Activated CD4-positive, alpha-beta T cell treated with anti-CD3 and anti-CD28 coated beads for 36 hours (primary cell): ENCODE measurements at regions of chr1 and their contacts with region 1.

Region 1: DNA sequence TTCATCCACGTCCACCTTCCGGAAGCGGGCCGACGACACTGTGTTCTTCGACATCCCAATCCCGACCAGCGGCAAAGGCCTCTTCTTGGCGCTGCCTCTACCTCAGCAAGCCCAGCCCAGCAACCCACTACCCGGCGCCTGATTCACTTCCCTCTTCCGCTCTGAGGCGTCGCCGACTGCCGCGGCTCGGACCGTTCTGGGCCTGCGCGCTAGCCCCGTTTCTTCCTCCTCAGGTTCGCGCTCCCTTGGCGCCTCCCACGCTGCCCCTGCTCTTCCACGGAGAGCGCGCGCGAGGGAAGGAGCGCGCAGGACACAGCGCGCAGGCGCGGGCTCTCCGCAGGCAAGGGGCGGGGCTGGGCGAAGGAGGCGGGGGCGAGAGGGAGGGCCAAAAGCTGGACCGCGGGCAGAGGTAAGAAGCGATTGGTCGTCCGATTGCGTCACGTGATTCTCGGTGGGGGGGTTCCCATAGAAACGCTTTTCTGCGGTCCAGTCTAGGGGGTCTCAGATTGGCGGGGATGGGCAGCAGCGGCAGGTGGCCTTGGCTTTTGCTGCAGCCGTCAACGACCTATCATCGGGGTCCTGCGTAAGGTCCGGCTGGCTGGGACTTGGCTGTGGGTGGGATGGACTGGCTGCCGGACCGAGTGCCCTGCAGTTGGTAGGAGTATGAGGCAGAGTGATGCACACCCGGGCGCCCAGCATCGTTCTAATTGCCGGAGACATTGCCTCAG is at the start of gene ARPC5:
- DNase-seq: peak; percentile 98
- ATAC-seq: peak; percentile 90
- H3K4me3 Mint-ChIP-seq: peak within 1 kb of the TSS; percentile 97
- H3K27ac Mint-ChIP-seq: peak within 1 kb of the TSS; percentile 100
- H3K4me1 Mint-ChIP-seq: peaks cover 32% of the 10 kb centered on the region
- H3K27me3 Mint-ChIP-seq: no peaks in the 10 kb centered on the region
- total RNA-seq, gene ARPC5: 115 to 165 TPM

Region 2: GRCh38 chr1:182839209-182840065 is 796.3 kb before region 1 on chr1 and contains the start of gene DHX9:
- CTCF ChIA-PET with region 1: no interaction called
- POLR2A ChIA-PET with region 1: no interaction called
- intact Hi-C with region 1: loop called (anchors 1 to 5 kb)
- DNase-seq: peak; percentile 97
- ATAC-seq: peak; percentile 89
- H3K4me3 Mint-ChIP-seq: peak within 1 kb of the TSS; percentile 92
- H3K27ac Mint-ChIP-seq: peak within 1 kb of the TSS; percentile 99
- H3K4me1 Mint-ChIP-seq: peaks cover 36% of the 10 kb centered on the region
- H3K27me3 Mint-ChIP-seq: no peaks in the 10 kb centered on the region
- total RNA-seq, gene DHX9: 244 to 255 TPM

Region 3: DNA sequence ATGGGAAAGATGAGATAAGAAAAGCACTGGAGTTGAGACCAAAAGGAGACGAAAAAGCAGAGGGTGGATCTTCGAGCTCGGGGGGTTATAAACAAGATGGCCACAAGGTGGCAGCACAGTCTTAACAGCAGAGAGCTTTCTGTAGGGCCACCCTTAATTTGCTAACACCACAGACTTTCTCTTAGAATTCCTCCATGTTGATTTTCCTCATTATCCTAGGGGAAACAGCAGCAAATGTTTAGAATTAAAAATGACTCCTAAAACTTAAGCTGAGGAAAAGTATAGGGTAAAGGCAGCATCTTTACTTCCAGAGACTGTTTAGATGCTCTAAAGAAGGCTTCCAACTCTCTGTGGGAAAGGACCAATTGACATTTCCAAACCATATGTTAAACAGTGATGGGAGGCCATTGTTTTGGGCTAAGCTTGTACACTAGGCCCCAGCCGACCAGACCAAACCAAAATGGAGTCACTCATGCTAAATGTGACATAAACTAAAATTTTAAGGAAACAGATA is 19.8 kb after region 1 on chr1:
- CTCF ChIA-PET with region 1: interaction called, 42 read pairs
- POLR2A ChIA-PET with region 1: no interaction called
- intact Hi-C with region 1: loop called (anchors 1 kb)
- DNase-seq: peak; percentile 86
- ATAC-seq: peak; percentile 27
- H3K4me3 Mint-ChIP-seq: no peak overlapping the region
- H3K27ac Mint-ChIP-seq: no peak overlapping the region
- H3K4me1 Mint-ChIP-seq: peaks cover 35% of the 10 kb centered on the region
- H3K27me3 Mint-ChIP-seq: no peaks in the 10 kb centered on the region

Region 4: DNA sequence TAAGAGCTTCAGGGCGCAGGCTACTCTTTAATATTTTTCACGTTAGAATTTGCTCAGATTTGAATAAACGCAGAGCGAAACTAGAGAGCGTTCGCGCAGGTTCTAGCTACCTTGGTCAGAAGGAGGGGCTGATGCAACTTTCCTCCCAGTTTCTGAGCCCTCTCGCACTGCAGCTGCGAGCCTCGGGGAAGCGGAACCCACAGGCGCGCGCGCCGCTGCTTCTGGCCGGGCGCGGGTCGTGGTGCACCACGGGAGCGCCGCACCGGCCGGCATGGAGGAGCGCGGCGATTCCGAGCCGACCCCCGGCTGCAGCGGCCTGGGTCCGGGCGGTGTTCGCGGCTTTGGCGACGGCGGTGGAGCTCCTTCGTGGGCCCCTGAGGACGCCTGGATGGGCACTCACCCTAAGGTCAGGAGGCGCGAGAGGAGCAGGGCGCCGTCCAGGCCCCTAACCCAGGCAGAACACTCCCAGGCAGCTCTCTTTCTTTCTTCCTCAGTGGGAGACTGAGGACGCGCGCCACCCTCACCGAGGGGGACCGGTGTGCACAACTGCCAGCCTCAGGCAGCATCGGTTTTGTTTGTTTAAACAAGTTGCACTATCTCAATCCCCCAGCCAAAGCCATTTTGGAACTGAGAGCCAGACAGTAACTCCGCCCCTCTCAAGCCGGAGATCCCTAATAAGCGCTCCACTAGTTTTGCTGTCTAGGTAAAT is 415.9 kb after region 1 on chr1 and contains the start of gene TSEN15:
- CTCF ChIA-PET with region 1: no interaction called
- POLR2A ChIA-PET with region 1: no interaction called
- intact Hi-C with region 1: loop called in 1 of 2 experiments (anchors 5 kb)
- DNase-seq: peak; percentile 89
- ATAC-seq: peak; percentile 97
- H3K4me3 Mint-ChIP-seq: peak within 1 kb of the TSS; percentile 93
- H3K27ac Mint-ChIP-seq: peak within 1 kb of the TSS; percentile 99
- H3K4me1 Mint-ChIP-seq: peaks cover 33% of the 10 kb centered on the region
- H3K27me3 Mint-ChIP-seq: peaks cover 9% of the 10 kb centered on the region
- total RNA-seq, gene TSEN15: 44.1 to 47.3 TPM

Region 5: DNA sequence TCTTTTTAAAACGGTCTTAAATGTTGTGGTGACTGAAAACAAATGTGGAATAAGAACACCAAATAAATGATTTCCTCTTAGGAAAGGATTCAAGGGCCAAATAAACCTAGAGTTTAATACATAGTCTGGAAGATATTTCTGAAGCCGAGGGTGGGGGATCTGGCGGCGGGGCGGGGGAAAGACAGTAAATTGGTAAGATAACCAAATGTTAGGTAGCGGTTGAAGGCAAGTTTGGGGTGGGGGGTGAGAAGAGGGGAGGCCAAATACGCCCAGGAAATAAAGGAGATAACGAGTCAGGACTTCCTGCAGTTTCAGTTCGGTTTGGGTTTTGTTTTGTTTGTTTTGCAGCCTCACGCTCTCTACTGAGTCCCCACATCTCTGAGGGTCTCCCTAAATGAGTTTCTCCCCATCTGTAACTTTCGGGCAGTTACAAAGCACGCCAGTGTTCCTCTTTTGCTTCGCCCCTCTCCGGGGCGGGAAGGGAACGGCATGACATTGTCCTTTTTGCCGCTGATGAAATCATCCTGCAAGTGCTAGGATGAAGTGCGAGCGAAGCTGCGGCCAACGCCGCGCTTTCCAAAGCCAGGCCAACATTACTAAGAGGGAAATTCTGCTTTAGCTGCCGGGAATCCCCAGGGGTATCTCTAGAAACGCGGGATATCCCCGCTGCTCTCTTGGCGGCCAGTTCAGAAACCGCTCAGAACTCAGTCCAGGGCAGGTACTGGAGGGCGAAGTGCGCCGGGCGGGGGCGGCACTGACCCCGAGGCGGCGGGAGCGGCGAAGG is 1337.7 kb after region 1 on chr1:
- CTCF ChIA-PET with region 1: no interaction called
- POLR2A ChIA-PET with region 1: no interaction called
- intact Hi-C with region 1: loop called in 1 of 2 experiments (anchors 1 kb)
- DNase-seq: peak; percentile 84
- ATAC-seq: peak; percentile 63
- H3K4me3 Mint-ChIP-seq: peak overlapping the region; percentile 86
- H3K27ac Mint-ChIP-seq: peak overlapping the region; percentile 97
- H3K4me1 Mint-ChIP-seq: peaks cover 45% of the 10 kb centered on the region
- H3K27me3 Mint-ChIP-seq: peaks cover 16% of the 10 kb centered on the region